GM10248 (cell line): ENCODE measurements at regions of chr10 and their contacts with region 1.

Region 1: DNA sequence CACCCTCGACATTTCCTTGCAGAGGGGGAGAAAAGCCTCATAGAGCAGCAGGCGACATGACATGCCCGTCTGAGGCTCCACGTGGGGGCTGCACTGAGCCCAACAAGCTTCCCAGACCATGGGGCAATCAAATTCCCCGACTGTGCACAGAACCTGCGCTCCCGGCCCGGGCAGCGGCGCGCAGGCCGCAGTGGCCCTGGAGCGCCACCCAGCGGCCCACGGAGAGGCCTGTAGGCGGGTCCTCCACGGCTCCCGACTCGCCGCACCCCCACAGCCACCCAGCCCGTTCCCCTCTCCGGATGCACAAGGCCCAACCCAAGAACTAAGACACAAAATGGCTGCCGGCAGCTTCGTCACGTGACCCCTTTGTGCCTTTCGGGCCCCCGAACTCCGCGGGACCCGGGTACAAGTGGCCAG is 816 bp downstream of the EPC1 start:
- DNase-seq: peak; percentile 94
- CTCF ChIP-seq: peak; percentile 86

Region 2: GRCh38 chr10:32055813-32056600 is 290.1 kb before region 1 on chr10 and contains the start of gene KIF5B:
- CTCF ChIA-PET with region 1: no interaction called
- POLR2A ChIA-PET with region 1: no interaction called
- DNase-seq: peak; percentile 98
- CTCF ChIP-seq: no peak

Region 3: GRCh38 chr10:32318476-32318896 is 27.7 kb before region 1 on chr10:
- CTCF ChIA-PET with region 1: interaction called, 12 read pairs
- POLR2A ChIA-PET with region 1: interaction called, 5 read pairs
- DNase-seq: peak; percentile 31
- CTCF ChIP-seq: no peak

Region 4: DNA sequence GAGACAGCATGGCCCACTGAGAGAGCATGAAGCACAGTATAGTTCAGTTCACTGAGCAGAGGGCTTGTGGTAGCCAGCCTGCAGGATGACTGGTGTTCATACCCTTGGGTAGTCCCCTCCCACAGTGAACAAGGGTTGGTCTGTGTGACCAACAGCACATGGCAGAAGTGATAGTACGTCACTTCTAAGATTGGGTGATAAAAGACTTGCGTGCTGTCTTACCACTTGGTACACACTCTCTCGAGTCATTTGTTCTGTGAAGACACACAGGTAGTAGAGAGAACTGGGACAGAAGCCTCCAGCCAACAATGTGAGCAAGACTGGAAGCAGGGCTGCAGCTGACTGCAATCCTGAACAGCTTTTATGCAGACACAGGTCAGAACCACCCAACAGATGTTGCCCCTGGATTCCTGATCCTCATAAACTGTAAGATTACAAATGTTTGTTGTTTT is 13.8 kb before region 1 on chr10:
- CTCF ChIA-PET with region 1: interaction called, 21 read pairs
- POLR2A ChIA-PET with region 1: interaction called, 7 read pairs
- DNase-seq: peak; percentile 62
- CTCF ChIP-seq: no peak

Region 5: DNA sequence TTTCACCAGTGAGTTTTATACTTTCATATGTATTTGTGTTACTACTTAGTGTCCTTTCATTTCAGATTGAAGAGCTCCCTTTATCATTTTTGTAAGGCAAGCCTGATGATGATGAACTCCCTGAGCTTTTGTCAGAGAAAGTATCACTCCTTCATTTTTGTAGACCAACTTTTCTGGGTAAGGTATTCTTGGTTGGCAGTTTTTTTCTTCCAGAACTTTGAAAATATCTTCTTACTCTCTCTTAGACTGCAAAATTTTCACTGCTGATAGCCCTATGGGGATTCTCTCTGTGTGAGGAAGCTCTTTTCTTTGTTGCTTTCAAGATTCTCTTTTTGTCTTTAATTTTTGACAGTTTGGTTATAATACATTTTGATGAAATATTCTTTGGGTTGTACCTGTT is 135.5 kb after region 1 on chr10:
- CTCF ChIA-PET with region 1: no interaction called
- POLR2A ChIA-PET with region 1: no interaction called
- DNase-seq: no peak
- CTCF ChIP-seq: no peak

Region 6: GRCh38 chr10:33115738-33116719 is 769.9 kb after region 1 on chr10:
- CTCF ChIA-PET with region 1: no interaction called
- POLR2A ChIA-PET with region 1: no interaction called
- DNase-seq: no peak
- CTCF ChIP-seq: no peak